ENCODE measurements at regions of chr19 and their contacts with region 1.

Region 1: DNA sequence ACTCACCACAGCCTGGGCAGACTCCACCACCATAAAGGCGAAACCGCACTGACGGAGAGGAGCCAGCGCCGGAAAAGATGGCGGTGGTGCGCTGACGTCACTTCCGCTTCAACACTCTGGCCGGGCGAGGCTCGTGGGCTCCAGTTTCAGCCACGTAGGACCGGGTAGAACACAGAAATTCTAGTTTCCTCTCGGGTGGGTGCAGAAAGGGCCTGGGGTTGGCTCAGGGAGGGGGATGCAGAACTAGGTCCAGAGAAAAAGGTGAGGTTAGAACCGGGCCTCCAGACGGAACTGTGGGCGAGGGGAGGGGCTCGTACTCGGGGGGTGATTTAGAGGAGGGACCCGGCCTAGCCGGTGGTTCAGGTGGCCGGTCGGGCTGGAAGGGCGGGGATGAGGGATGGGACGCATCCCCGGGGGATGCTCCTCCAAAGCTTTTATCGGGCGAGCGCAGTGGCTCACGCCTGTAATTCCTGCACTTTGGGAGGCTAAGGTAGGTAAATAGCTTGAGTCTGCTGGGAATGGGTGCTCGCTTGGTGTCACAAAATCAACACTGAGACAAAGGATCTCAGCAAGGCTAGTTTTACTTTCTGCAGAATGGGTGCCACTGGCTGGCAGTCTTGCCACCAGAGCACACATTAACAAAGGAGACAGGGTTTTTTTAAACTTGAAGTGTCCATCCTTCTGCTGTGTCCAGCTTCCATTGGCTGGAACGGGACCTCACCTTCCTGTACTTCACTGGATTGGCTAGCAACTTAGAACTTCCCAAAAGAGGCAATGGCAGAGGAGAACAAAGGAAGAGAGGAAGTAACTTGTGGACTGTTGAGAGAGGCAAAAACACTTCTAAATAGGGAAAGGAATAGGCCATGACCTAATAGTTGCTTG is at the start of gene ZNF561:
- DNase-seq: peak; percentile 73 to 93 (median 89)
- ATAC-seq: peak; percentile 94
- H3K4me3 ChIP-seq: peak within 1 kb of the TSS; percentile 96
- H3K4me3 Mint-ChIP-seq: peak within 1 kb of the TSS; percentile 96 to 100 (median 99)
- H3K27ac ChIP-seq: peak within 1 kb of the TSS; percentile 89
- H3K27ac Mint-ChIP-seq: peak within 1 kb of the TSS; percentile 99 to 100 (median 100)
- H3K4me1 ChIP-seq: peaks cover 12 to 13% of the 10 kb centered on the region in 2 donors
- H3K4me1 Mint-ChIP-seq: peaks cover 13 to 34% (median 25%) of the 10 kb centered on the region in 7 donors
- H3K27me3 ChIP-seq: no peaks in the 10 kb centered on the region
- H3K27me3 Mint-ChIP-seq: peaks cover 0 to 4% (median 0%) of the 10 kb centered on the region in 5 donors
- total RNA-seq, gene ZNF561: 35.9 to 72.5 (median 42.3) TPM

Region 2: GRCh38 chr19:9205501-9206113 is 415.8 kb before region 1 on chr19:
- CTCF ChIA-PET with region 1: no interaction called
- POLR2A ChIA-PET with region 1: no interaction called
- intact Hi-C with region 1: loop called (anchors 1 to 10 kb)
- DNase-seq: peak; percentile 36 to 63 (median 53)
- ATAC-seq: peak; percentile 69
- H3K4me3 ChIP-seq: no peak overlapping the region
- H3K4me3 Mint-ChIP-seq: peak overlapping the region in 9 of 10 donors; percentile 37 to 69 (median 56)
- H3K27ac ChIP-seq: no peak overlapping the region
- H3K27ac Mint-ChIP-seq: no peak overlapping the region
- H3K4me1 ChIP-seq: no peaks in the 10 kb centered on the region
- H3K4me1 Mint-ChIP-seq: peaks cover 0 to 8% (median 0%) of the 10 kb centered on the region in 7 donors
- H3K27me3 ChIP-seq: no peaks in the 10 kb centered on the region
- H3K27me3 Mint-ChIP-seq: peaks cover 0 to 22% (median 6%) of the 10 kb centered on the region in 5 donors

Region 3: GRCh38 chr19:9435279-9436268 is 185.8 kb before region 1 on chr19 and contains the start of gene ZNF266:
- CTCF ChIA-PET with region 1: no interaction called
- POLR2A ChIA-PET with region 1: interaction called, 3 read pairs
- intact Hi-C with region 1: loop called in 1 of 2 experiments (anchors 5 kb)
- DNase-seq: peak; percentile 82 to 93 (median 91)
- ATAC-seq: peak; percentile 92
- H3K4me3 ChIP-seq: peak within 1 kb of the TSS; percentile 73
- H3K4me3 Mint-ChIP-seq: peak within 1 kb of the TSS; percentile 89 to 97 (median 93)
- H3K27ac ChIP-seq: peak within 1 kb of the TSS; percentile 94
- H3K27ac Mint-ChIP-seq: peak within 1 kb of the TSS; percentile 95 to 99 (median 98)
- H3K4me1 ChIP-seq: peaks cover 26 to 27% of the 10 kb centered on the region in 2 donors
- H3K4me1 Mint-ChIP-seq: peaks cover 20 to 54% (median 48%) of the 10 kb centered on the region in 7 donors
- H3K27me3 ChIP-seq: no peaks in the 10 kb centered on the region
- H3K27me3 Mint-ChIP-seq: no peaks in the 10 kb centered on the region
- total RNA-seq, gene ZNF266: 34.0 to 73.9 (median 55.0) TPM

Region 4: GRCh38 chr19:9674663-9675357 is 53.4 kb after region 1 on chr19 and contains the start of gene ZNF562:
- CTCF ChIA-PET with region 1: no interaction called
- POLR2A ChIA-PET with region 1: interaction called, 7 read pairs
- intact Hi-C with region 1: loop called in 1 of 2 experiments (anchors 1 kb)
- DNase-seq: peak; percentile 66 to 82 (median 76)
- ATAC-seq: peak; percentile 92
- H3K4me3 ChIP-seq: peak within 1 kb of the TSS; percentile 99
- H3K4me3 Mint-ChIP-seq: peak within 1 kb of the TSS; percentile 86 to 99 (median 96)
- H3K27ac ChIP-seq: peak within 1 kb of the TSS; percentile 91
- H3K27ac Mint-ChIP-seq: peak within 1 kb of the TSS; percentile 87 to 99 (median 96)
- H3K4me1 ChIP-seq: peaks cover 0 to 4% of the 10 kb centered on the region in 2 donors
- H3K4me1 Mint-ChIP-seq: peaks cover 11 to 33% (median 29%) of the 10 kb centered on the region in 7 donors
- H3K27me3 ChIP-seq: no peaks in the 10 kb centered on the region
- H3K27me3 Mint-ChIP-seq: no peaks in the 10 kb centered on the region
- total RNA-seq, gene ZNF562: 8.9 to 18.6 (median 16.5) TPM

Region 5: DNA sequence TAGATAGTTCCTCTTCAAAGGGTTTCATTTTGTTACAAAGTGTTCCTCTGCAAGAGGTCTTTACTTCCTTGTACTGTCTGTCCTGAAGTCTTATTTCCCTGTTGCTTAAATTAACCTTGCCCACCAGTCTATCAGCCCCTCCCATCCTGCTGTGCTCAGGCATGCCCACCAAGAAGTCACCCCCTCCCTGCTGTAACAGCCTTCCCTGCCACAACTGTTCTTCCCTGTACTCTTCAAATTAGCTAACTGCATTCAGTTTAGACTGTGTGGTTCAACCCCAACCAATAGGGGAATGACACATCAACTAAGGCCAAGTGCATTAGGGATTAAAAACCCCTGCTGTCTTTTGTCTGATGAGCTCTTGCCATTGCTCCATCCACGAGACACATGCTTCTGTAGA is 87.9 kb after region 1 on chr19:
- CTCF ChIA-PET with region 1: no interaction called
- POLR2A ChIA-PET with region 1: no interaction called
- intact Hi-C with region 1: no loop called
- DNase-seq: no peak
- ATAC-seq: no peak
- H3K4me3 ChIP-seq: no peak overlapping the region
- H3K4me3 Mint-ChIP-seq: no peak overlapping the region
- H3K27ac ChIP-seq: no peak overlapping the region
- H3K27ac Mint-ChIP-seq: peak overlapping the region in 1 of 9 donors; percentile 41
- H3K4me1 ChIP-seq: no peaks in the 10 kb centered on the region
- H3K4me1 Mint-ChIP-seq: peaks cover 0 to 3% (median 0%) of the 10 kb centered on the region in 7 donors
- H3K27me3 ChIP-seq: no peaks in the 10 kb centered on the region
- H3K27me3 Mint-ChIP-seq: peaks cover 0 to 19% (median 7%) of the 10 kb centered on the region in 5 donors

Region 6: DNA sequence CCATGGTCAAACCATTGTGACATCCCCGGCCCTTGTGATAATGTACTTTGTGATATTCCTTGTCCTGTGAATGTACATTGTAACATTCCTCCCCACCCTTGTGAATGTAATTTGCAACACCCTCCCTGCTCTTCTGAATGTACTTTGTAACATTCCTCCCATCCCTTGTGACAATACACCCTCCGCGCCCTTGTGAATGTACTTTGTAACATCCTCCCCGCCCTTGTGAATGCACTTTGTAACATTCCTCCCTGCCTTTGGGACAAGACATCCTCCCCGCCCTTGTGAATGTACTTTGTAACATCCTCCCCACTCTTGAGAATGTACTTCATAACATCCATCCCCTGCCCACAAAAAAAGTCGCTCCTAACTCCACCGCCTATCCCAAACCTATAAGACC is 130.0 kb after region 1 on chr19:
- CTCF ChIA-PET with region 1: no interaction called
- POLR2A ChIA-PET with region 1: no interaction called
- intact Hi-C with region 1: no loop called
- DNase-seq: no peak
- ATAC-seq: no peak
- H3K4me3 ChIP-seq: no peak overlapping the region
- H3K4me3 Mint-ChIP-seq: no peak overlapping the region
- H3K27ac ChIP-seq: no peak overlapping the region
- H3K27ac Mint-ChIP-seq: no peak overlapping the region
- H3K4me1 ChIP-seq: no peaks in the 10 kb centered on the region
- H3K4me1 Mint-ChIP-seq: no peaks in the 10 kb centered on the region
- H3K27me3 ChIP-seq: no peaks in the 10 kb centered on the region
- H3K27me3 Mint-ChIP-seq: no peaks in the 10 kb centered on the region

Region 7: DNA sequence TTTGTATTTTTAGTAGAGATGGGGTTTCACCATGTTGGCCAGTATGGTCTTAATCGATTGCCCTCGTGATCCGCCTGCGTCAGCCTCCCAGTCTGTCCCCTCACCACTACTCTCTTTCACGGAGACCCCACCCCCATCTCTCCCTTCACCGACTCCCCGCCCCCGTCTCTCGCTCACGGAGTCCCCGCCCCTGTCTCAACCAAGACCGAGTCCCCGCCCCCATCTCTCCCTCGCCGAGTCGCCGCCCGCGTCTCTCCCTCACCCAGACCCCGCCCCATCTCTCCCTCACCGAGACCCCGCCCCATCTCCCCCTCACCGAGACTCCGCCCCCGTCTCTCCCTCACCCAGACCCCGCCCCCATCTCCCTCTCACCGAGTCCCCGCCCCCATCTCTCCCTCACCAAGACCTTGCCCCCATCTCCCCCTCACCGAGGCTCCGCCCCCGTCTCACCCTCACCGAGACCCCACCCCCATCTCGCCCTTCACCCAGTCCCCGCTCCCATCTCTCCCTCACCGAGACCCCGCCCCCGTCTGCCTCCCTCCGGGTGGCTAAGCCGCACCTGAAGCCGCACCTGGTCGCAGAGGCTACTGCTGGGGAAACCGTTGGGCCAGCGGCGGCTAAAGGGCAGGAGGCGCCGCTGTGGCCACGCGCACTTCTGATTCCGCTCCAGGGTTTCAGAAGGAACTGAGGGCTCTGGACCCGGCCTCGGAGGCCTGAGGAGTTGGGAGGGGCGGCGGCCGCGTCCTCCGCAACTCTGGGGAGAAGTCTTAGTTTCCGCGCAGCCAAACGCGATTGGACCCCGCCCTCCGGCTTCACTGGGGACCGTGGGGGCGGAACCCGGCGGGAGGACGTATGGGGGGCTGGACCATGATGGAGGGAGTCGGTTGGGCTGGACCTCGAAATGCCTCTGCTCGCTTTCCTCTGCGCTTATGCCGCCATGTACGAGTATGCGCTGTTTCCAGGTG is 164.3 kb after region 1 on chr19:
- CTCF ChIA-PET with region 1: interaction called, 7 read pairs
- POLR2A ChIA-PET with region 1: interaction called, 3 read pairs
- intact Hi-C with region 1: loop called in 1 of 2 experiments (anchors 1 kb)
- DNase-seq: peak; percentile 81 to 97 (median 92)
- ATAC-seq: peak; percentile 92
- H3K4me3 ChIP-seq: peak overlapping the region; percentile 86
- H3K4me3 Mint-ChIP-seq: peak overlapping the region; percentile 73 to 95 (median 88)
- H3K27ac ChIP-seq: peak overlapping the region; percentile 80
- H3K27ac Mint-ChIP-seq: peak overlapping the region; percentile 83 to 99 (median 94)
- H3K4me1 ChIP-seq: peaks cover 5 to 9% of the 10 kb centered on the region in 2 donors
- H3K4me1 Mint-ChIP-seq: peaks cover 10 to 37% (median 27%) of the 10 kb centered on the region in 7 donors
- H3K27me3 ChIP-seq: no peaks in the 10 kb centered on the region
- H3K27me3 Mint-ChIP-seq: no peaks in the 10 kb centered on the region

Region 8: GRCh38 chr19:9914315-9915207 is 293.2 kb after region 1 on chr19:
- CTCF ChIA-PET with region 1: no interaction called
- POLR2A ChIA-PET with region 1: no interaction called
- intact Hi-C with region 1: loop called (anchors 1 kb)
- DNase-seq: peak; percentile 59 to 83 (median 72)
- ATAC-seq: peak; percentile 95
- H3K4me3 ChIP-seq: peak overlapping the region; percentile 64
- H3K4me3 Mint-ChIP-seq: peak overlapping the region; percentile 66 to 86 (median 72)
- H3K27ac ChIP-seq: no peak overlapping the region
- H3K27ac Mint-ChIP-seq: no peak overlapping the region
- H3K4me1 ChIP-seq: peaks cover 3 to 5% of the 10 kb centered on the region in 2 donors
- H3K4me1 Mint-ChIP-seq: peaks cover 6 to 12% (median 9%) of the 10 kb centered on the region in 7 donors
- H3K27me3 ChIP-seq: peaks cover 0 to 13% of the 10 kb centered on the region in 2 donors
- H3K27me3 Mint-ChIP-seq: peaks cover 22 to 33% (median 27%) of the 10 kb centered on the region in 5 donors

Measured in naive thymus-derived CD4-positive, alpha-beta T cell (primary cell).